ENCODE measurements at regions of chr1 and their contacts with region 1.

Region 1: GRCh38 chr1:96346708-96347107 is 374.9 kb upstream of the PTBP2 start:
- DNase-seq: no peak
- H3K4me3 ChIP-seq: no peak overlapping the region
- H3K27ac ChIP-seq: no peak overlapping the region
- H3K4me1 ChIP-seq: no peaks in the 10 kb centered on the region
- H3K27me3 ChIP-seq: no peaks in the 10 kb centered on the region
- CTCF ChIP-seq: peak; percentile 14 to 40

Region 2: GRCh38 chr1:96164053-96164906 is 182.4 kb before region 1 on chr1:
- CTCF ChIA-PET with region 1: no interaction called
- dilution Hi-C with region 1: no loop called
- in situ Hi-C with region 1: no loop called
- intact Hi-C with region 1: no loop called
- DNase-seq: no peak
- H3K4me3 ChIP-seq: no peak overlapping the region
- H3K27ac ChIP-seq: no peak overlapping the region
- H3K4me1 ChIP-seq: no peaks in the 10 kb centered on the region
- H3K27me3 ChIP-seq: no peaks in the 10 kb centered on the region
- CTCF ChIP-seq: no peak

Region 3: DNA sequence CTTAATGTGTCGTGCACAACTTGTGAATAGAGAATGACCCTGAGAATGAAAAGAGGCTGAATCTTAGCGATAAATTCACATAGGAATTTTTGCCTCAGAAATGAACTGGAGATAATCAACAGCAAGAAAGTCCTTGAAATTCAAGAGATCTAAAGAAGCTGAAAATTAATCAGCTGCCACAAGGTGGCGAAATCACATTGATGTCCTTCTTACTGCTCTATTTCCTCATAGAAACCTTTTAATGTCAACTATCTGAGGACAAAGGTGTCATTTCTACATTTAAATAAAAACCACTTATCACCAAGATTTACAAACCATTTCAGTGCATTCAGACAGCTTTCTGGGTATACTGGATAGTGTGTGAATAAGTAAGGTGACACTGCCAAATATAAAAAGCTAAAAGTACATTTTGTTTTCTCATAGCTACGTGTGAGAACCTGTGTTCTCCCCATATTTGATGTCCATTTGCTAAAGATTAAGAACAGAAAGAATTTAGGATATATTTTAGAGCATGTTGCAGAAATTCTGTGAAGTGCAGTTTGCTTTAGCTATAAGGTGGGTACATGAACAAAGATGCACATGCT is 110.5 kb before region 1 on chr1:
- CTCF ChIA-PET with region 1: no interaction called
- dilution Hi-C with region 1: no loop called
- in situ Hi-C with region 1: no loop called
- intact Hi-C with region 1: no loop called
- DNase-seq: peak; percentile 38
- H3K4me3 ChIP-seq: no peak overlapping the region
- H3K27ac ChIP-seq: no peak overlapping the region
- H3K4me1 ChIP-seq: no peaks in the 10 kb centered on the region
- H3K27me3 ChIP-seq: no peaks in the 10 kb centered on the region
- CTCF ChIP-seq: peak; percentile 44 to 62

Region 4: GRCh38 chr1:96845464-96845863 is 498.8 kb after region 1 on chr1:
- CTCF ChIA-PET with region 1: no interaction called
- dilution Hi-C with region 1: no loop called
- in situ Hi-C with region 1: no loop called
- intact Hi-C with region 1: loop called (anchors 1 kb)
- DNase-seq: peak; percentile 12
- H3K4me3 ChIP-seq: no peak overlapping the region
- H3K27ac ChIP-seq: no peak overlapping the region
- H3K4me1 ChIP-seq: no peaks in the 10 kb centered on the region
- H3K27me3 ChIP-seq: no peaks in the 10 kb centered on the region
- CTCF ChIP-seq: peak; percentile 64 to 71